Right cardiac atrium (tissue), 5 donors: ENCODE measurements at regions of chr2 and their contacts with region 1.

Region 1: GRCh38 chr2:177254433-177255226 is 9.9 kb downstream of the NFE2L2 start:
- DNase-seq: peak in 2 of 3 donors; percentile 53 to 62
- ATAC-seq: peak; percentile 23 to 38
- H3K4me3 ChIP-seq: no peak overlapping the region
- H3K27ac ChIP-seq: peak overlapping the region; percentile 32
- H3K4me1 ChIP-seq: peaks cover 37% of the 10 kb centered on the region
- H3K27me3 ChIP-seq: no peaks in the 10 kb centered on the region

Region 2: GRCh38 chr2:177169810-177170514 is 84.7 kb before region 1 on chr2:
- intact Hi-C with region 1: loop called in 1 of 4 experiments (anchors 10 kb)
- DNase-seq: no peak
- ATAC-seq: no peak
- H3K4me3 ChIP-seq: no peak overlapping the region
- H3K27ac ChIP-seq: no peak overlapping the region
- H3K4me1 ChIP-seq: no peaks in the 10 kb centered on the region
- H3K27me3 ChIP-seq: no peaks in the 10 kb centered on the region

Region 3: DNA sequence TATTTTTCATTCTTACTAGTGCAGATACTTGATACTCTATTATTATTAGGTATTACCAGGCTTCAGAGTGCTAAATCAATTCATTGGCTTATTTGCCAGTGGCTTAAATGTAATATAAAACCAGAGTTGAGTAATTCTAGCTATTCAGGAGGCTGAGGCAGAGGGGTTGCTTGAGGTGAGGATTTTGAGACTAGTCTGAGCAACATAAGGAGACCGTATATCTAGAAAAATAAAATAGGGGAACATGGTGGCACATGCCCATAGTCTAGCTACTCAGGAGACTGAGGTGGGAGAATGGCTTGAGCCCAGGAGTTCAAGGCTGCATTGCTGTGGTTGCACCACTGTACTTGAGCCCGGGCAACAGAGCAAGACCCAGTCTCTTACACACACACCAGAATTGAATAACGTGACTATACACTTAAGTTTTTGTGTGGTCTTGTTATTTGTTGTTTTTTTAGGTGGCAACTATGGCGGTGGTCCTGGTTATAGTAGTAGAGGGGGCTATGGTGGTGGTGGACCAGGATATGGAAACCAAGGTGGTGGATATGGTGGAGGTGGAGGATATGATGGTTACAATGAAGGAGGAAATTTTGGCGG is 37.3 kb before region 1 on chr2:
- intact Hi-C with region 1: loop called in 1 of 4 experiments (anchors 5 kb)
- DNase-seq: no peak
- ATAC-seq: no peak
- H3K4me3 ChIP-seq: no peak overlapping the region
- H3K27ac ChIP-seq: no peak overlapping the region
- H3K4me1 ChIP-seq: peaks cover 3% of the 10 kb centered on the region
- H3K27me3 ChIP-seq: no peaks in the 10 kb centered on the region

Region 4: DNA sequence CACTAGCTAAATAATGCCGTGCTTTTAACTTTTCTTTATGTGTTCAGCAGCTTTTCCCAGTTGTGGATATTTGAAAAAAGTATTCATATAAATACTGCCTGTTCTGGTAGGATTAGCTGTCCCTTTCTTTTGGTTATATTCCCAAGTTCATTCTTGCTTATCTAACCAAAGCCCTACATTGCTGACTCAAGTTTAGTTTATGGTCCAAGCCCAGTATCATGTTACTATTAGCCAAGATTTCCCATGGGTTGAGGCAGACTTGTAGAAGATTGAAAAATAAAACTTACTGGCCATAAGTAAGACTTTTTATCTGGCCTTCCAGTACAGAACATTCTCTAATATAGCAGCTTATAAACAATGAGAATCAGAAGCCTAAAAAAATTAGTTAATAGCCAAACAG is 59.6 kb after region 1 on chr2:
- intact Hi-C with region 1: no loop called
- DNase-seq: no peak
- ATAC-seq: peak; percentile 84 to 93
- H3K4me3 ChIP-seq: no peak overlapping the region
- H3K27ac ChIP-seq: no peak overlapping the region
- H3K4me1 ChIP-seq: no peaks in the 10 kb centered on the region
- H3K27me3 ChIP-seq: no peaks in the 10 kb centered on the region

Region 5: GRCh38 chr2:178211943-178212342 is 957.3 kb after region 1 on chr2:
- intact Hi-C with region 1: no loop called
- DNase-seq: no peak
- ATAC-seq: no peak
- H3K4me3 ChIP-seq: no peak overlapping the region
- H3K27ac ChIP-seq: no peak overlapping the region
- H3K4me1 ChIP-seq: no peaks in the 10 kb centered on the region
- H3K27me3 ChIP-seq: no peaks in the 10 kb centered on the region